Left cardiac atrium (tissue), 4 donors: ENCODE measurements at regions of chr1 and their contacts with region 1.

Region 1: GRCh38 chr1:24635195-24635843 is 7.8 kb upstream of the SRRM1 start:
- DNase-seq: no peak
- ATAC-seq: peak; percentile 71 to 75

Region 2: DNA sequence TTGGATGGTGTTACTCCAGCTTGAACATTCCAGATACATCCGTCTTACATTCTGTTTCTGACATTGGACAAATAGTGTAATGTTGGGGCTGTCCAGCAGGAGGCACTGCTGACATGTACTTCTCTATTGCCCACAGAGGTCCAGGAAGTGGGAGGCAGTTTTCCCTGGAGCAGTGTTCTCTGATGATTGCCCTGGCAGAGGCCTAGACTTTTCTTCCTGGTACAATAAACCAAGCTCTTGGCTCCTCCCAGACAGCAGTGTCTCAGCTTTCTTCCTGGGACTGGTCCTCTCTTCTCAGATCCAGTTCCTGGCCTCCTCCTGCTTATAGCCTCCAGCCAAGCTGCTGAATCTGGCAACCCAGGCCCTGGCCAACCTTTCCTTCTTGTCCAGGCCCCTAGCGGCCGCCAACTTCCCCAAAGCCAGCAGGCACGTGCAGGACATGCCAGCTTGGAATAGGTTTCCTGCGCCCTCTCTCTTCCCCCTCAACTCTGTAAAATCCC is 433.3 kb before region 1 on chr1:
- intact Hi-C with region 1: loop called in 1 of 2 experiments (anchors 5 kb)
- DNase-seq: peak; percentile 83
- ATAC-seq: peak; percentile 82 to 91

Region 3: DNA sequence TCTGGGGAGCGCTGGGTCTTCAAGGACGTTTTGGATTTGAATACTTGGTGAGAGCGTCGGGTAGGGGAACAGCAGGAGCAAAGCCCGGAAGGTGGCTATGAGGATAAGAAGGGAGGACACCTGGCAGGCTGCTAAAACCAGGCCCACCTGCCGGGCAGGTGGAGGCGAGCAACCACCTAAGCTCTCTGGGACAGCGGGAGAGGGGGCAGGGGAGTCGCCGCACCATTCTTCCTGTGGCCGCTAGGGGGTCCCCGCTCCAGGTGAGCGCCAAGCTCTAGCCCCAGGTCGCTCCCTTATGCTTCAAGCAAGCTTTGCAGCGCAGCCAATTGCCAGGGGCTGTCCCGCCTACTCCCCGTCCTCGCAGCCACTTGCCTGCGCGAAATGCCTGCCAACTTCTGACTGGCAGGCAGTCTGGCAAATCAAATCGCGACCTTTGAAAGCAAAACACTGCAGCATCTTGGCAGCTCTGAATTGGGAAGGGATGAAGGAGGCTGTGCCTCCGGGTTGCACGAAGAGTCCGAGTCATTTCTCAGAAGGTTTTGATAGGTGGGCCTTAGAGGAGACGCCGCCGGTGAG is 219.9 kb before region 1 on chr1 and contains the start of gene NIPAL3:
- intact Hi-C with region 1: loop called in 1 of 2 experiments (anchors 10 kb)
- DNase-seq: peak; percentile 98
- ATAC-seq: peak; percentile 95
- total RNA-seq, gene NIPAL3: 20.4 to 26.2 TPM

Region 4: GRCh38 chr1:24541711-24542346 is 93.5 kb before region 1 on chr1:
- intact Hi-C with region 1: loop called in 1 of 2 experiments (anchors 2 kb)
- DNase-seq: no peak
- ATAC-seq: no peak

Region 5: DNA sequence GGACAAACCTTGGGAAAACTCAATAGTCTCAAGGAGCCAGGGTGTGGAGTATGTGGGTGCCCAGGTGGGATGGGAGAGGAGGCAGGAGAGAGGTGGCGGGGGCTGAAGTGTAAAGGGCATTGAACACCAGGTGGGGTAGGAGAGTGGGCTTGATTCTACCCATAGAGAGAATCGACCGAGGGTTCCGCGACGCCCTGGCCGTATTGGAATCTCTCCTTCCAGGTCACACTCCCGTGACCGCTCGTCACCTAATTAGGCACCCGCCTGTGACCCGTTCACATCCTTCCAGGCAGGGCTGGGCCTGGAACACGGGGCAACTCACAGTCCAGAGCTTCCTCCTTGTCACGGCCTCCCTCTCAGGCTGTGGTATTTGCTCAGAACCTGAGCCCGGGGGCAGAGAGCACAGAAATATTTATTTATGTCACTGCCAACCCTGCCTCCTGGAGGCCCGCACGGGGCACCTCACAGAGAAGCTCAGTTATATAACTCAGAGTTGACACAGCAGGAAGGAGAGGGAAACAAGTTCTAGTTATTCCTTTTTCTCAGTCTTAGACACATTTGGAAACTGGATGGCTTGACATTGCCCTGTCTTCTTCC is 67.4 kb before region 1 on chr1:
- intact Hi-C with region 1: loop called in 1 of 2 experiments (anchors 10 kb)
- DNase-seq: no peak
- ATAC-seq: peak; percentile 34 to 36